Heart left ventricle (tissue), 16 donors: ENCODE measurements at regions of chr13 and their contacts with region 1.

Region 1: DNA sequence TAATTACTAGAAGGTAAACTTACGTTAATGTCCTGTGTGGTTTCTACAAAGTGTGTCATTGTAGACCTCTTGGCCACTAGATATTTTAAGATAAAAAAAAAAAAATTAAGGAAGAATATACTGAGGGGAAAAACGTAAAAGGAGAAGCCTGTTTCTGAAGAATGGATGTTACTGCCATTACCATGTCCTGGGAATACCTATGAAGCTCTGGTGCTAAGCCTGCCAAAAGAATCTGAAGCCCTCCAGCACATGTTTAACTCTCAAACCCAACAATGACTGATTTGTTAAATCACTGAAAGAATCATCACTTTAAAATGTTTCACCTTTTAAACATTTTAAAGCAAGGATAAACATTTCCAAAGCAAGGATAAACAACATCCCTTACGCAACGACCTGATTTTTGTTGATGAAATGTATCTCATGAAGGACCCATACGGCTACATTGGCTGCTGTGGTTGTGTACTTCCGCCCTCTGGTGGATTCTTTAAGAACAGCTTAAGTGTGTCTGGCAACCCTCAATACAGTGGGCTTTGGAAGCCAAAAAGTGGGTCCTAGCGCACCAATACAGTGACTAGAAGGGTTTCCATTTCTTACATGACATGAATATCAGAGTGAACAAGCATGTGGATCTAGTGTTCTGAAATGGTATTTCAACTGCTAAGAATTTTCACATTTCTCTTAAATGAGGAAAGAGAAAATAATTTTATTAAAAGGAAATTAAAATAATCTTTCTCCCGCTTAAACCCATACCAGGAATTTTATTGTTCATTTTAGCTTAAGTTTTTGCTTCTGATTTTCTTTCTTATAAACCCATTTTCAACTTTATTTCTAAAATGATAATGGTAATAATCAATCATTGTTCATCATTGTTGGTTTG is 74.5 kb upstream of the RAP2A start:
- DNase-seq: peak in 3 of 5 donors; percentile 38 to 51 (median 44)
- ATAC-seq: peak; percentile 83 to 89 (median 85)
- H3K4me3 ChIP-seq: no peak overlapping the region
- H3K27ac ChIP-seq: peak overlapping the region in 5 of 12 donors; percentile 4 to 40 (median 29)
- H3K4me1 ChIP-seq: peaks cover 5 to 42% (median 15%) of the 10 kb centered on the region in 12 donors
- H3K27me3 ChIP-seq: no peaks in the 10 kb centered on the region
- CTCF ChIP-seq: peak; percentile 80 to 92 (median 87)
- POLR2A ChIP-seq: no peak

Region 2: GRCh38 chr13:97030705-97031452 is 328.5 kb before region 1 on chr13:
- intact Hi-C with region 1: loop called in 5 of 10 experiments (anchors 5 to 10 kb)
- DNase-seq: no peak
- ATAC-seq: no peak
- H3K4me3 ChIP-seq: no peak overlapping the region
- H3K27ac ChIP-seq: no peak overlapping the region
- H3K4me1 ChIP-seq: peaks cover 0 to 21% (median 0%) of the 10 kb centered on the region in 12 donors
- H3K27me3 ChIP-seq: no peaks in the 10 kb centered on the region
- CTCF ChIP-seq: peak in 6 of 12 donors; percentile 16 to 30 (median 24)
- POLR2A ChIP-seq: no peak

Region 3: GRCh38 chr13:97221989-97222700 is 137.3 kb before region 1 on chr13 and contains the start of gene MBNL2:
- intact Hi-C with region 1: loop called in 1 of 10 experiments (anchors 5 kb)
- DNase-seq: peak; percentile 91 to 93 (median 92)
- ATAC-seq: peak; percentile 93 to 98 (median 95)
- H3K4me3 ChIP-seq: peak within 1 kb of the TSS; percentile 47 to 81 (median 73)
- H3K27ac ChIP-seq: peak within 1 kb of the TSS; percentile 71 to 96 (median 90)
- H3K4me1 ChIP-seq: peaks cover 7 to 38% (median 29%) of the 10 kb centered on the region in 12 donors
- H3K27me3 ChIP-seq: no peaks in the 10 kb centered on the region
- CTCF ChIP-seq: no peak
- POLR2A ChIP-seq: peak in 1 of 2 donors; percentile 92
- total RNA-seq, gene MBNL2: 59.4 to 100 (median 83.1) TPM

Region 4: GRCh38 chr13:97432917-97433726 is 73.7 kb after region 1 on chr13:
- intact Hi-C with region 1: loop called in 1 of 10 experiments (anchors 5 kb)
- DNase-seq: peak; percentile 99
- ATAC-seq: peak; percentile 92 to 96 (median 95)
- H3K4me3 ChIP-seq: peak overlapping the region; percentile 72 to 92 (median 87)
- H3K27ac ChIP-seq: peak overlapping the region; percentile 96 to 100 (median 99)
- H3K4me1 ChIP-seq: peaks cover 0 to 43% (median 28%) of the 10 kb centered on the region in 12 donors
- H3K27me3 ChIP-seq: no peaks in the 10 kb centered on the region
- CTCF ChIP-seq: no peak
- POLR2A ChIP-seq: peak in 1 of 2 donors; percentile 30

Region 5: DNA sequence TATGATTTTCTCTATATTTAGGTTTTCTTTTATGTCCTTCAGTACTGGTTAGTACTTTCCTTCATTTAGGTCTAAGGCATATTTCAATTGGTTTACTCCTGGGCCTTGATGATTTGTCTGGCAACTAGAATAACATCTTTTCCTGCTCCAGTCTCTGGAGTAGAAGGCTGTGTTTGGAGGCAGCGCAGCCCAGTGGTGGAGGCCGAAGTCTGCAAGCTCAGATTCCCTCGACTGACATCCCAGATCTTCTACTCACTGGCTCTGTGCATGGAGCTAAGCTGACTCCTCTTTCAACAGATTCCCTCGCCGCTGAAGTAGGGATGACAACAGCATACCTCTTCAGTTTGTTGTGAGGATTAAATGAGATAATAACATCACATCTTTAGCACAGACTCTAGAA is 215.5 kb after region 1 on chr13:
- intact Hi-C with region 1: loop called in 3 of 10 experiments (anchors 10 kb)
- DNase-seq: peak in 3 of 5 donors; percentile 16 to 26 (median 24)
- ATAC-seq: peak; percentile 20 to 56 (median 44)
- H3K4me3 ChIP-seq: no peak overlapping the region
- H3K27ac ChIP-seq: no peak overlapping the region
- H3K4me1 ChIP-seq: peaks cover 0 to 8% (median 0%) of the 10 kb centered on the region in 12 donors
- H3K27me3 ChIP-seq: no peaks in the 10 kb centered on the region
- CTCF ChIP-seq: peak; percentile 13 to 62 (median 41)
- POLR2A ChIP-seq: no peak

Region 6: GRCh38 chr13:97810152-97810551 is 450.7 kb after region 1 on chr13:
- intact Hi-C with region 1: loop called in 2 of 10 experiments (anchors 10 kb)
- DNase-seq: no peak
- ATAC-seq: no peak
- H3K4me3 ChIP-seq: no peak overlapping the region
- H3K27ac ChIP-seq: no peak overlapping the region
- H3K4me1 ChIP-seq: no peaks in the 10 kb centered on the region
- H3K27me3 ChIP-seq: no peaks in the 10 kb centered on the region
- CTCF ChIP-seq: peak in 10 of 12 donors; percentile 15 to 54 (median 34)
- POLR2A ChIP-seq: no peak